AG04449 (cell line): ENCODE measurements at regions of chr10 and their contacts with region 1.

Region 1: DNA sequence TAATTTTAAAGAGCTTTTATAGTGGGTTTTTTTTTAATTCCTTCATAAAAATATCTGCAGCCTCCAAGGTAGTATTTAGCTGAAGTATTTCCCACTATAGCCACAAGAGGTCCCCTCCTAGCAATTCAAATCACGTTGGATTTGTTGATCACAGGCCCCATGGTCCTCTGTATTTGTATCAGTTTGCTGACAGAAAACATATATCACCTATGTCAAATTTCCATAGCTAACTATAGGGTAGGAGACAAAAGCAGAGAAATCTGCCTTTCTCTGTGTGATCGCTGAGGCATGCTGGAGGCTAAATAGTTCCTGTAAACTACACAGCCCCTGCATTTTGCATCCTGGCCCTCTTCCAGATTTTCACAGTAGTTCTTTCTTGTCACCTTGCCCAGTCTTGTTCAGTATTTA is 1.7 kb upstream of the CTNNA3 start:
- DNase-seq: no peak
- H3K4me3 ChIP-seq: no peak overlapping the region
- CTCF ChIP-seq: peak; percentile 39

Region 2: DNA sequence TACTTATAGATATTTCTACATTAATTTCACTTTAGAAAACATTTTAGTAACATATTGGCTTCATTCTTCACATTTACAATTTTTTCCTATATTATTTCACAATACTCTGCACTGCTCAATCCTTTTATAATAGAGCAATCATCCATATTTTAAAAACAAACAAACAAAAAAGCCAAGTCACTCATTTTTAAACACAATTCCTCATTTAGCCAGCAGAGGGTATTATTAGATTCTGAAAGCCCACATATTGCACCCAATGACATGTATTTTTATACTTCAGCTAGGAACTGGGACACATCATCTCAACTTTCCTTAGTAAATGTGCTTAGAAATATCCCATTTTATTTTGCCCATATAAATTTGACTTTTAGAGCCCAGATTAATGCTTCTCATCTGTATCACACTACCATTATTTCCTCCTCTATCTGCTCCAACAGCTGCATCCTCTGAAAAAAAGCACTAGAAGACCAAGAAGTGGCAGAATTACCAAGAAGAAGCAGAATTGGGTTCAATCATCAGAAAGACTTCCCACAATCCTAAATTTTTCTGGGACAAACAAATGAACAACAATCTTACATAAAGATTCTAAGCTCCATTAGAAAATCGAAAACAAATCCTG is 31.2 kb before region 1 on chr10:
- CTCF ChIA-PET with region 1: interaction called, 13 read pairs
- POLR2A ChIA-PET with region 1: no interaction called
- DNase-seq: no peak
- H3K4me3 ChIP-seq: no peak overlapping the region
- CTCF ChIP-seq: peak; percentile 31

Region 3: DNA sequence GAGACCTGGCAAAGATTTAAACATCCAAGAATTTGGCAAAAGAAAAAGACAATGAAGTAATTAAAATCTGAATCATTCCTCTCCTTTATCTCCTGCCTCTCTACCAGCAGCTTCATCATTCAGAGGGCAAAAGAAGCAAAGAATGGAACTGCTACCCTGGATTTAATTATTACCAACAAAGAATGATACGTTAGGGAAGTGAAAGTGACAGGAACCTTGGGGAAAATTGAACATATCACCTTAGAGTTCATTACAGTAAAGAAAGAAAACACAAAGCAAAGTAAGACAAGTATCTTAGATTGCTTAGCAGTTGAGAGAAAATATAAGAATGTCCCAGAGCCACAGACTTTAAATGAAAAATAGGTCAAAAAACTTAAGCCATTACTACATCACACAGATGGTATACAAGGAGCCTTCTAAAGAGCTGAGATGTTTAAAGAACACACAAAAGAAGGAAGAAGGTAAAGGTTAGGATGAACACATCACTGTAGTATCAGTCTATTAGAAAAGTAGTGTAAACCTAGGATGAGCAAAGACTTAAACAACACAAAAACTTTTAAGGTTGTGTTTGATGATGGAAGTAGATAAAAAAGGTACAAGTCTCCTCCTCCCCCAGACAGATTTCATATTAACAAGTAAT is 19.3 kb before region 1 on chr10:
- CTCF ChIA-PET with region 1: interaction called, 11 read pairs
- POLR2A ChIA-PET with region 1: no interaction called
- DNase-seq: no peak
- H3K4me3 ChIP-seq: no peak overlapping the region
- CTCF ChIP-seq: no peak

Region 4: GRCh38 chr10:67764012-67764822 is 66.5 kb after region 1 on chr10:
- CTCF ChIA-PET with region 1: interaction called, 10 read pairs
- POLR2A ChIA-PET with region 1: no interaction called
- DNase-seq: peak; percentile 56
- H3K4me3 ChIP-seq: peak overlapping the region; percentile 83
- CTCF ChIP-seq: no peak